ENCODE measurements at regions of chr18 and their contacts with region 1.

Region 1: GRCh38 chr18:43789234-43790000 is 512.1 kb upstream of the SYT4 start:
- DNase-seq: no peak
- ATAC-seq: peak; percentile 59

Region 2: GRCh38 chr18:43620936-43621335 is 168.5 kb before region 1 on chr18:
- intact Hi-C with region 1: loop called (anchors 5 kb)
- DNase-seq: no peak
- ATAC-seq: no peak

Region 3: GRCh38 chr18:43735570-43735969 is 53.8 kb before region 1 on chr18:
- intact Hi-C with region 1: no loop called
- DNase-seq: no peak
- ATAC-seq: no peak

Region 4: DNA sequence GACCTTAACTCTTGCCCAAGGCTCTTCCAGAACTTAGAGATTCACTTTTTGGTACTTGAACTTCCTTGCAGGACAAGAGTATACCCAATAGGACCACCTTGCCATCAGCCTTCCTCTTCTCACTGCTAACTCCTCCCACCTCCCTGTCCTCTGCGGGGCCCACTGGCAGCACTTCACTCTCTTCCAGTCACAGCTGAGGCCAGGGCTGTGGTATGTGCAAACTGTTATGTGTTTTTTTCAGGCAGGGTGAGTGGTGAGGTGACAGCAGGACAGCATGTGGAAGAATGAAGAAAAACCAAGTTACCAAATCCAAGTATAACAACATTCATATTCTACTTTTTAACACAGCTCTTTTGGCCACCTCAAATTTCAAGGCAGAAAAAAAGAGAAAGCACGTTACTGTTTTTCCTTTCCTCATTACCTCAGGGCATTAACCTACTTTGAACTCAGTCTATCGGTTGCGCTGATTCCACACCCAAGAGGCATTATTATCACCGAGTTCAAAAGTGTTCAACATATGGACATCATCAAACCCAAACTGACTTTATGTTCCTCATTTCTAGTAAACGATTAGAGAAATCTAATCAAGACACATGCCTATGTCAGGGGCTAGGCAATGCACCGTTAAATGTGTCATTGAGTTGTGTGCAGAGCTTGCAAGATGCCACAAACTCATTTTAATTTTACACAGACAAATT is 93.1 kb after region 1 on chr18:
- intact Hi-C with region 1: no loop called
- DNase-seq: no peak
- ATAC-seq: peak; percentile 90

Region 5: DNA sequence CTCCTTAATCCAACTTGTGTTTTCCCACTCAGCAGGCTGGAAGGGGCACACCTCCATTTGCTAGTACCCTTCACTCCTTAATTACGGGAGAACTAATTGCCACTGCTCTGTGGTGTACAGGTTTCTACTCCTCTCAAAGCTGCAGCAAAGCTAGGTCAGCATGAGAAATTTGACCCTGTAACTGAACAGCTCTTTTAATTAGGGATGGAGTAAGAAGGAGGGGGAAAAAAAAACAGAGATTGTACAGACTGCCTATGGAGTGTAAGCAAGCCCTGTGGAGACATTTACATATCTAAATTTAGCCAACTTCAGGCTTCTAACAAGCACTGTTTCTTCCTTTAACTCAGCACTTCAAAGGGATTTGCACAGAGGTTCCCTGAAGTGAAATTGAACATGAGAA is 261.6 kb after region 1 on chr18:
- intact Hi-C with region 1: no loop called
- DNase-seq: no peak
- ATAC-seq: no peak

Region 6: DNA sequence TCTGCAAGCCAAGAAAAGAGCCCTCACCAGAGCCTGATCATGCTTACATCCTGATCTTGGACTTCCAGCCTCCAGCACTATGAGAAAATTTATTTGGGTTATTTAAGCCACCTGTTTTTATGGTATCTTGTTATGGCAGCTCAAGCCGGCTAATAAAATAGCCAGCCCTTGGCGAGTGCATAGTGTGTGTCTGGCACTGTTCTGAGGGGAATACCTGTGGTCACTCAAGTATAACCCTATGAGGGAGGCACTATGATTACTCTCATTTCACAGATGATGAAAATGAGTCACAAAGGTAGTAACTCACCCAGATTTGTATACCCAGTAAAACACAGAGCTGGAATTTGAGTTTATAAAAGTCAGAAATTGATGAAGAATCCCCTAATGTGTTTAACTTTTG is 334.3 kb after region 1 on chr18:
- intact Hi-C with region 1: loop called (anchors 10 kb)
- DNase-seq: no peak
- ATAC-seq: no peak

Region 7: GRCh38 chr18:44325903-44326635 is 536.7 kb after region 1 on chr18:
- intact Hi-C with region 1: loop called (anchors 5 kb)
- DNase-seq: no peak
- ATAC-seq: no peak

Measured in Right ventricle myocardium inferior (tissue), 1 donor.